MCF 10A (cell line): ENCODE measurements at regions of chr22 and their contacts with region 1.

Region 1: DNA sequence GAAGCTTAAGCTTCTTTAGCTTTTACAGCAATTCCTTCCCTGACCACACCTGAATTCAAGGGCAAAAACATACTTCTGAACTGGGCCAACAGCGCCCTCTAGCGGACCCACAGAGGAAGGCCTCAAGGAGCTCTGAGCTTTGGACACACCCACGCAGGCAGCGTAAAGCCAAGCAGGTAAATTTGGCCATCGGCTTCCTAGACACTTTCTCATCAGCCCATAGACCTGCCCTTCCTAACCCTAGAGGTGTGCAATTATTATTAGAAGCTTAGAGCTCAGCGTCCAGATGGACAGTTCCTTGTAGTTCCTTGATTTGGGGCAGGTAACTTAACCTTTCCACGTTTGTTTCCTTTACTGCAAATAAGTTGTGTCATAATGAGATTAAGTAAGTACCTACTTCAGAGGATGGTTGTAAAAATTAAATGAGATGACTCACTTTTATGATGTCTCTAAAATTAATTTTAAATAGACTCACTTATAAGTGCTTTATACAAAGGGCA is 25.7 kb upstream of the HMGXB4 start:
- DNase-seq: peak; percentile 84
- H3K4me3 Mint-ChIP-seq: no peak overlapping the region
- H3K27ac Mint-ChIP-seq: no peak overlapping the region
- H3K4me1 Mint-ChIP-seq: no peaks in the 10 kb centered on the region
- H3K27me3 Mint-ChIP-seq: peaks cover 56% of the 10 kb centered on the region
- CTCF ChIP-seq: peak; percentile 90

Region 2: DNA sequence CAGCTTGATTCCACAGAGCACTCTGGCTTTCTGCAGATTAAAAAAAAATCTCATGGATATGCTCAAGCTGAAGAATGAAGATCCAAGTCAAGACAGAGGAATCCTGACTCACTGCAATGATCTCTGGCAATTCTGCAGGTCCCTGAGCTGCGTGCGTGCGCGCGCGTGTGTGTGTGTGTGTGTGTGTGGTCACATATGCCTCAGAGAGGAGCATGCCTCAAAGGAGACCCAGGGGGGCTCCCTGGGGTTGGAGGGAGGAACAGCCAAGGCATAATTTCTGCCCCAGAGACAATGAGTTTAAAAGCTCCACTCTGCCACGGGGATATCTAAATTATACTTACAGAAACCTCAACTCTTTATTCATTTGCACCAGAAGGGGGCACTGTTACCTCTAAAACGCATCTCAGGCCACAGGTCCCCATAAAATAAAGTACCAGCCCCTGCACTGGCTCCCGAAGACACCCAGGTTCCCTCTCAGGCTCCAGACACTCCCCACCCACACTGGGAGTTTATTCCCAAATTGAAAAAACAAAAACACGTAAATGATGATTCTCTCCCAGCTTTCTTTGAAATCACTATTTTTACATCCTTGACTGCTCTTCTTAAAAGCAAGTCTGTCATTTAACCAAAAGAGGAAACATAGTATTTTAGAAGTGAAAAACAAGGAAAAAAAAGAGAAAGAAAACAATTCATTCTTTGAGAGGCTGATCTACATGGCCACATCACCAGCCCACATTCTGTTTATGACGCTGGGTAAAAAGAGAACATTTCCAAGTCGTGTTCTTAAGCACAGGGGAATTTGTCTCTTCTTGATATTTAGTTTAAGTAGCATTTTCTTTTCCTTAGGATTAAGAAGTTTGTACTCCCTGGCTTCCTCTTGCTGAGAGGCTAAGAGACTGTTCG is 1712.3 kb before region 1 on chr22:
- CTCF ChIA-PET with region 1: interaction called, 4 read pairs
- POLR2A ChIA-PET with region 1: no interaction called
- intact Hi-C with region 1: loop called (anchors 2 kb)
- DNase-seq: no peak
- H3K4me3 Mint-ChIP-seq: no peak overlapping the region
- H3K27ac Mint-ChIP-seq: no peak overlapping the region
- H3K4me1 Mint-ChIP-seq: no peaks in the 10 kb centered on the region
- H3K27me3 Mint-ChIP-seq: no peaks in the 10 kb centered on the region
- CTCF ChIP-seq: peak; percentile 60

Region 3: GRCh38 chr22:34738661-34739400 is 492.8 kb before region 1 on chr22:
- CTCF ChIA-PET with region 1: no interaction called
- POLR2A ChIA-PET with region 1: no interaction called
- intact Hi-C with region 1: no loop called
- DNase-seq: no peak
- H3K4me3 Mint-ChIP-seq: no peak overlapping the region
- H3K27ac Mint-ChIP-seq: no peak overlapping the region
- H3K4me1 Mint-ChIP-seq: no peaks in the 10 kb centered on the region
- H3K27me3 Mint-ChIP-seq: no peaks in the 10 kb centered on the region
- CTCF ChIP-seq: no peak

Region 4: GRCh38 chr22:35150183-35151107 is 81.2 kb before region 1 on chr22:
- CTCF ChIA-PET with region 1: interaction called, 19 read pairs
- POLR2A ChIA-PET with region 1: no interaction called
- intact Hi-C with region 1: loop called (anchors 1 kb)
- DNase-seq: peak; percentile 50
- H3K4me3 Mint-ChIP-seq: no peak overlapping the region
- H3K27ac Mint-ChIP-seq: peak overlapping the region; percentile 16
- H3K4me1 Mint-ChIP-seq: no peaks in the 10 kb centered on the region
- H3K27me3 Mint-ChIP-seq: peaks cover 25% of the 10 kb centered on the region
- CTCF ChIP-seq: peak; percentile 76

Region 5: GRCh38 chr22:35155403-35156025 is 76.1 kb before region 1 on chr22:
- CTCF ChIA-PET with region 1: interaction called, 19 read pairs
- POLR2A ChIA-PET with region 1: interaction called, 3 read pairs
- intact Hi-C with region 1: loop called (anchors 1 kb)
- DNase-seq: no peak
- H3K4me3 Mint-ChIP-seq: no peak overlapping the region
- H3K27ac Mint-ChIP-seq: no peak overlapping the region
- H3K4me1 Mint-ChIP-seq: peaks cover 4% of the 10 kb centered on the region
- H3K27me3 Mint-ChIP-seq: peaks cover 11% of the 10 kb centered on the region
- CTCF ChIP-seq: no peak

Region 6: DNA sequence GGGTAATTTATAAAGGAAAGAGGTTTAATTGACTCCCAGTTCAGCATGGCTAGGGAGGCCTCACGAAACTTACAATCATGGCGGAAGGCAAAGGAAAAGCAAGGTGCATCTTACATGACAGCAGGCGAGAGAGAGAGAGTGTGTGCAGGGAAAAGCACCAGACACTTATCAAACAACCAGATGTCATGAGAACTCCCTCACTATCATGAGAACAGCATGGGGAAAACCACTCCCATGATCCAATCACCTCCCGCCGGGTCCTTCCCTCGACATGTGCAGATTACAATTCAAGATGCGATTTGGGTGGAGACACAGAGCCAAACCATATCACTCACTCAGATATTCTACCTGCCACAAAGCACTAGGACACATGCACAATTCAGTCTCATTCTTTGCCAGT is 22.4 kb before region 1 on chr22:
- CTCF ChIA-PET with region 1: interaction called, 10 read pairs
- POLR2A ChIA-PET with region 1: no interaction called
- intact Hi-C with region 1: no loop called
- DNase-seq: no peak
- H3K4me3 Mint-ChIP-seq: no peak overlapping the region
- H3K27ac Mint-ChIP-seq: no peak overlapping the region
- H3K4me1 Mint-ChIP-seq: peaks cover 6% of the 10 kb centered on the region
- H3K27me3 Mint-ChIP-seq: no peaks in the 10 kb centered on the region
- CTCF ChIP-seq: no peak

Region 7: DNA sequence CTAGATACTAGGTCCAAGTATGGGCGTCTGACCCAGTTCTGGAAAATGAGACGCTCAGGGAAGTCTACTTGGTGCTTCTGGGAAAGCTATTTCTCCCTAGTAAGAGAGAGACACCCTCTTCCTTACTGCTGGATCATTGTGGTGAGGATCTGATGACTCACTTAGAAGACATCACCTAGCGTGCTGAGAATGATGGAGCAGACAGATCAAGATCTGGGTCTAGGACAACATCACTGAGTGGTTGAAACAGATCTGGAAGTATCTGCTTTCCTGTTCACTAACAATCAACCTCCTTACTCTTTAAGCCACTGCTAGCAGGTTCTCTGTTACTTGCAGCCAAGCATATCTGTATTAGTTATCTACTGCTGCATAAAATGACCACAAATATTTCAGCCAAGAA is 12.6 kb before region 1 on chr22:
- CTCF ChIA-PET with region 1: interaction called, 14 read pairs
- POLR2A ChIA-PET with region 1: no interaction called
- intact Hi-C with region 1: no loop called
- DNase-seq: peak; percentile 43
- H3K4me3 Mint-ChIP-seq: no peak overlapping the region
- H3K27ac Mint-ChIP-seq: no peak overlapping the region
- H3K4me1 Mint-ChIP-seq: no peaks in the 10 kb centered on the region
- H3K27me3 Mint-ChIP-seq: peaks cover 9% of the 10 kb centered on the region
- CTCF ChIP-seq: no peak

Region 8: GRCh38 chr22:35250156-35250555 is 18.5 kb after region 1 on chr22:
- CTCF ChIA-PET with region 1: interaction called, 10 read pairs
- POLR2A ChIA-PET with region 1: no interaction called
- intact Hi-C with region 1: no loop called
- DNase-seq: no peak
- H3K4me3 Mint-ChIP-seq: no peak overlapping the region
- H3K27ac Mint-ChIP-seq: no peak overlapping the region
- H3K4me1 Mint-ChIP-seq: no peaks in the 10 kb centered on the region
- H3K27me3 Mint-ChIP-seq: no peaks in the 10 kb centered on the region
- CTCF ChIP-seq: no peak

Region 9: GRCh38 chr22:35308480-35309021 is 76.9 kb after region 1 on chr22:
- CTCF ChIA-PET with region 1: no interaction called
- POLR2A ChIA-PET with region 1: no interaction called
- intact Hi-C with region 1: no loop called
- DNase-seq: no peak
- H3K4me3 Mint-ChIP-seq: no peak overlapping the region
- H3K27ac Mint-ChIP-seq: no peak overlapping the region
- H3K4me1 Mint-ChIP-seq: peaks cover 25% of the 10 kb centered on the region
- H3K27me3 Mint-ChIP-seq: no peaks in the 10 kb centered on the region
- CTCF ChIP-seq: no peak

Region 10: GRCh38 chr22:35399678-35400334 is 168.2 kb after region 1 on chr22 and contains the start of gene MCM5:
- CTCF ChIA-PET with region 1: no interaction called
- POLR2A ChIA-PET with region 1: no interaction called
- intact Hi-C with region 1: no loop called
- DNase-seq: peak; percentile 97
- H3K4me3 Mint-ChIP-seq: peak within 1 kb of the TSS; percentile 99
- H3K27ac Mint-ChIP-seq: peak within 1 kb of the TSS; percentile 90
- H3K4me1 Mint-ChIP-seq: peaks cover 13% of the 10 kb centered on the region
- H3K27me3 Mint-ChIP-seq: no peaks in the 10 kb centered on the region
- CTCF ChIP-seq: no peak
- total RNA-seq, gene MCM5: 26.2 and 35.0 TPM in 2 replicates